Aorta (tissue), 5 donors: ENCODE measurements at regions of chr2 and their contacts with region 1.

Region 1: GRCh38 chr2:195575879-195576401 is 81.1 kb upstream of the SLC39A10 start:
- DNase-seq: no peak
- ATAC-seq: no peak
- H3K4me3 ChIP-seq: no peak overlapping the region
- H3K27ac ChIP-seq: no peak overlapping the region
- H3K4me1 ChIP-seq: no peaks in the 10 kb centered on the region
- H3K27me3 ChIP-seq: no peaks in the 10 kb centered on the region

Region 2: DNA sequence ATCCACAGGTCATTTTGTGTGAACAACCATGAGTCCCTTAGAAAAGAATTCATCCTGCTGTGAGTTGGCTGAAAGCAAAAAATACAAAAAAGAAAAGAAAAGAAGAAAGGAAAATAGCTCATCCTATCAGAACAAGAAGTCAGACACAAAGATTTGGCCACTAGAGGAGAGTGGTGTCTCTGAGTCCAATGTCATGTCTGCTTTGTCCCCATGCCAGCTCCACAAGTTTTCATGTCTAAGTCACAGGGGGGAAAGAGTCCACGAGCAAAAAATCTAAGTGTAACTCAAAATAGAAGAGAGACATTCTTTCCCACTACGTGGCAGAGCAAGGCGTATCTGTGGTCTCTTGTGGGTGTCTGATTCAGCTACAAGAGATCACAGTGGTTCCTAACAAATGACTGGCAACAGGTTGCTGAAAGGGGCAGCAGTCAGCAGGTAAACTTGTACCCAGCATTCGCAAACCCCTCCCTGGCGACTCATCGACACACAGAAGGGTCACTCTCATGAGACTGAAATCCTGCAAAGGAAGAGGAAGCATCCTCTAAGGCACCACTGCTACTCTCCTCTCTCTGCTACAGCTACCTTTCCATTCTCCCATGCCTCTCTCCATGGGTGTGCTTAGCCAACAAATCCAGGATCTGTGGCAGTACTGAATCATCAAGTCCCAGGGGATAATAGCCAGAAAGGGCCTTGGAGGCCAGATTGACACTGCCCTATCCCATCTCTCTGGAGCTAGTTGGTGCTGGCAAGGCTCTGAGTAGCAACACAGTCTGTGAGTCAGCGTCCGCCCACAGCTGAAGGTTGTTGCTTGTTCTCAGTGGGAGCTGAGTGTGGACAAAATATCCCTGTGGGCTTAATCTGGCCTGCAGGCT is 41.9 kb before region 1 on chr2:
- intact Hi-C with region 1: loop called in 1 of 2 experiments (anchors 5 kb)
- DNase-seq: peak; percentile 91 to 92
- ATAC-seq: peak; percentile 93
- H3K4me3 ChIP-seq: peak overlapping the region in 1 of 2 donors; percentile 19
- H3K27ac ChIP-seq: peak overlapping the region; percentile 36 to 76
- H3K4me1 ChIP-seq: peaks cover 3 to 4% of the 10 kb centered on the region in 2 donors
- H3K27me3 ChIP-seq: no peaks in the 10 kb centered on the region